ENCODE measurements at regions of chr16 and their contacts with region 1.

Region 1: GRCh38 chr16:25051406-25052150 is 36.4 kb upstream of the ARHGAP17 start:
- DNase-seq: no peak
- ATAC-seq: no peak
- H3K4me3 ChIP-seq: peak overlapping the region in 1 of 5 experiments; percentile 24
- H3K4me3 Mint-ChIP-seq: peak overlapping the region; percentile 66
- H3K27ac ChIP-seq: peak overlapping the region in 1 of 2 donors; percentile 27
- H3K27ac Mint-ChIP-seq: peak overlapping the region; percentile 74
- H3K4me1 ChIP-seq: peaks cover 34 to 38% of the 10 kb centered on the region in 2 donors
- H3K4me1 Mint-ChIP-seq: peaks cover 41% of the 10 kb centered on the region
- H3K27me3 ChIP-seq: no peaks in the 10 kb centered on the region
- H3K27me3 Mint-ChIP-seq: no peaks in the 10 kb centered on the region
- CTCF ChIP-seq: no peak

Region 2: DNA sequence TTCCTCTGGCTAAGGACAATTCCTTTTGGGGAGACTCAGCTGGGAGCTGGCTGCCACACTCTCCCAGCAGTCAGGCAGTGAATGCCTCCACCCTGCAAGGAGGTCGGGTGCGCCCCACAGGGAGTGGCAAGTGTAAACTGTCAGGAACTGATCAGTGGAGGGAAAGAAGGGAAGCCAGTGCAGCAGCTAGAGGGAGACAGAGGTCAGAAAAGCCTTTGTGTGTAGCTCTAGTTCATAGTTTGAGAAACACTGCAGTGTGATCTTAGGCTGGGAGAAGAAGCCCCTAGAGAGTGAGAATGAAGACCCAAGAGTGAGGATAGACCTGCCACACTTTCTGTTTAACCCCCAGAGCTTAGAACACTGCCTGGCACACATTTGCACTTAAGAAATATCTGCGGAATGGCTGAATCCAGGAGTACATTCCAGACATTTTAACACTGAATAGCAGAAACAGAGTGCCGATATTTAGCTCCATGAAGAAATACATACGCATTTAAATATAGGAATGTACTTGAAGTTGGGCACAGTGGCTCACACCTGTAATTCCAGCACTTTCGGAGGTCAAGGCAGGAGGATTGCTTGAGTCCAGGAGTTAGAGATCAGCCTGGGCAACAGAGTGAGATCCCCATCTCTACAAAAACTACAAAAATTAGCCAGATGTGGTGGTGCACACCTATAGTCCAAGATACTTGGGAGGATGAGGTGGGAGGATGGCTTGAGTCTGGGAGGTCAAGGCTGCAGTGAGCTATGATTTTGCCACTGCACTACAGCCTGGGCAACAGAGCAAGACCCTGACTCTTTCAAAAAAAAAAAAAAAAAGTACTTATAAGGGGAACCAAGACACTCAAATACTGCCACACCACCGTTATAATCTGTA is 216.9 kb before region 1 on chr16:
- CTCF ChIA-PET with region 1: no interaction called
- POLR2A ChIA-PET with region 1: no interaction called
- intact Hi-C with region 1: no loop called
- DNase-seq: no peak
- ATAC-seq: no peak
- H3K4me3 ChIP-seq: no peak overlapping the region
- H3K4me3 Mint-ChIP-seq: no peak overlapping the region
- H3K27ac ChIP-seq: no peak overlapping the region
- H3K27ac Mint-ChIP-seq: no peak overlapping the region
- H3K4me1 ChIP-seq: no peaks in the 10 kb centered on the region
- H3K4me1 Mint-ChIP-seq: no peaks in the 10 kb centered on the region
- H3K27me3 ChIP-seq: no peaks in the 10 kb centered on the region
- H3K27me3 Mint-ChIP-seq: no peaks in the 10 kb centered on the region
- CTCF ChIP-seq: no peak

Region 3: GRCh38 chr16:25014500-25015147 is 37.0 kb before region 1 on chr16:
- CTCF ChIA-PET with region 1: interaction called, 6 read pairs
- POLR2A ChIA-PET with region 1: interaction called, 7 read pairs
- intact Hi-C with region 1: loop called (anchors 1 kb)
- DNase-seq: no peak
- ATAC-seq: peak; percentile 16
- H3K4me3 ChIP-seq: peak overlapping the region; percentile 73 to 92 (median 79)
- H3K4me3 Mint-ChIP-seq: peak overlapping the region; percentile 97
- H3K27ac ChIP-seq: peak overlapping the region; percentile 61 to 89
- H3K27ac Mint-ChIP-seq: peak overlapping the region; percentile 96
- H3K4me1 ChIP-seq: peaks cover 75 to 80% of the 10 kb centered on the region in 2 donors
- H3K4me1 Mint-ChIP-seq: peaks cover 84% of the 10 kb centered on the region
- H3K27me3 ChIP-seq: no peaks in the 10 kb centered on the region
- H3K27me3 Mint-ChIP-seq: no peaks in the 10 kb centered on the region
- CTCF ChIP-seq: no peak

Region 4: GRCh38 chr16:25031441-25032307 is 19.9 kb before region 1 on chr16:
- CTCF ChIA-PET with region 1: interaction called, 3 read pairs
- POLR2A ChIA-PET with region 1: interaction called, 6 read pairs
- intact Hi-C with region 1: loop called (anchors 1 kb)
- DNase-seq: peak; percentile 95
- ATAC-seq: peak; percentile 98
- H3K4me3 ChIP-seq: peak overlapping the region; percentile 70 to 91 (median 74)
- H3K4me3 Mint-ChIP-seq: peak overlapping the region; percentile 85
- H3K27ac ChIP-seq: peak overlapping the region; percentile 76 to 81
- H3K27ac Mint-ChIP-seq: peak overlapping the region; percentile 87
- H3K4me1 ChIP-seq: peaks cover 29 to 47% of the 10 kb centered on the region in 2 donors
- H3K4me1 Mint-ChIP-seq: peaks cover 45% of the 10 kb centered on the region
- H3K27me3 ChIP-seq: no peaks in the 10 kb centered on the region
- H3K27me3 Mint-ChIP-seq: no peaks in the 10 kb centered on the region
- CTCF ChIP-seq: no peak

Region 5: GRCh38 chr16:25126820-25127232 is 75.2 kb after region 1 on chr16:
- CTCF ChIA-PET with region 1: interaction called, 4 read pairs
- POLR2A ChIA-PET with region 1: no interaction called
- intact Hi-C with region 1: loop called (anchors 1 kb)
- DNase-seq: no peak
- ATAC-seq: no peak
- H3K4me3 ChIP-seq: no peak overlapping the region
- H3K4me3 Mint-ChIP-seq: no peak overlapping the region
- H3K27ac ChIP-seq: no peak overlapping the region
- H3K27ac Mint-ChIP-seq: no peak overlapping the region
- H3K4me1 ChIP-seq: no peaks in the 10 kb centered on the region
- H3K4me1 Mint-ChIP-seq: peaks cover 11% of the 10 kb centered on the region
- H3K27me3 ChIP-seq: no peaks in the 10 kb centered on the region
- H3K27me3 Mint-ChIP-seq: no peaks in the 10 kb centered on the region
- CTCF ChIP-seq: no peak

Region 6: GRCh38 chr16:25176081-25176480 is 124.5 kb after region 1 on chr16:
- CTCF ChIA-PET with region 1: no interaction called
- POLR2A ChIA-PET with region 1: no interaction called
- intact Hi-C with region 1: loop called (anchors 1 kb)
- DNase-seq: no peak
- ATAC-seq: no peak
- H3K4me3 ChIP-seq: no peak overlapping the region
- H3K4me3 Mint-ChIP-seq: no peak overlapping the region
- H3K27ac ChIP-seq: no peak overlapping the region
- H3K27ac Mint-ChIP-seq: no peak overlapping the region
- H3K4me1 ChIP-seq: no peaks in the 10 kb centered on the region
- H3K4me1 Mint-ChIP-seq: no peaks in the 10 kb centered on the region
- H3K27me3 ChIP-seq: no peaks in the 10 kb centered on the region
- H3K27me3 Mint-ChIP-seq: no peaks in the 10 kb centered on the region
- CTCF ChIP-seq: no peak